Spleen (tissue), 13 donors: ENCODE measurements at regions of chr10 and their contacts with region 1.

Region 1: GRCh38 chr10:91163269-91163868 is 57.1 kb upstream of the PCGF5 start:
- DNase-seq: peak; percentile 95
- H3K4me3 ChIP-seq: peak overlapping the region; percentile 70 to 84 (median 78)
- H3K27ac ChIP-seq: peak overlapping the region; percentile 91 to 98 (median 96)
- H3K4me1 ChIP-seq: peaks cover 4 to 46% (median 34%) of the 10 kb centered on the region in 6 donors
- H3K27me3 ChIP-seq: peaks cover 0 to 8% (median 0%) of the 10 kb centered on the region in 7 donors
- CTCF ChIP-seq: peak in 4 of 11 experiments; percentile 12 to 39 (median 25)
- POLR2A ChIP-seq: peak in 1 of 3 donors; percentile 49

Region 2: DNA sequence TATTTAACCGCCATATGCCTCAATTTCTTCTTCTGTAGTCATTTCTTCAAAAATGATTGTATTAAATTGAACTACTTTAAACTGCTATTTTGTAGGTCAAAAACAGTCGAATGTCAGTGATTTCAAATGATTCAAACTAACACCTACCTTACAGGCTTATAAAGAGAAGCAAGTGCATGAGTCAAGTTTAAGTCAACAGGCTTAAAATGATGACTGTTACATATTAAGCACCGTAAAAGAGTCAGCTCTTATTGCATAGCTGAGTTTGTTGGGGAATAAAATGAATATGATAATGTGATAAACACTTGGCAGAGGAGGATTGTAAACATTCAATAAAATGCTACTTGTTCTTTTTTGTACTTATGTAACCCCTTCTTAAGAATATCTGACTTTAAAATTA is 152.4 kb before region 1 on chr10:
- intact Hi-C with region 1: no loop called
- DNase-seq: no peak
- H3K4me3 ChIP-seq: no peak overlapping the region
- H3K27ac ChIP-seq: no peak overlapping the region
- H3K4me1 ChIP-seq: peaks cover 0 to 34% (median 14%) of the 10 kb centered on the region in 6 donors
- H3K27me3 ChIP-seq: no peaks in the 10 kb centered on the region
- CTCF ChIP-seq: no peak
- POLR2A ChIP-seq: no peak

Region 3: GRCh38 chr10:91220194-91220953 is 57.0 kb after region 1 on chr10 and contains the start of gene PCGF5:
- intact Hi-C with region 1: loop called (anchors 10 kb)
- DNase-seq: peak; percentile 99
- H3K4me3 ChIP-seq: peak within 1 kb of the TSS; percentile 72 to 92 (median 79)
- H3K27ac ChIP-seq: peak within 1 kb of the TSS; percentile 87 to 97 (median 94)
- H3K4me1 ChIP-seq: peaks cover 24 to 75% (median 49%) of the 10 kb centered on the region in 6 donors
- H3K27me3 ChIP-seq: no peaks in the 10 kb centered on the region
- CTCF ChIP-seq: peak in 10 of 11 experiments; percentile 40 to 80 (median 61)
- POLR2A ChIP-seq: peak in 2 of 3 donors; percentile 69 to 76
- total RNA-seq, gene PCGF5: 48.6 to 68.5 (median 51.6) TPM

Region 4: GRCh38 chr10:91251430-91252056 is 88.2 kb after region 1 on chr10:
- intact Hi-C with region 1: no loop called
- DNase-seq: peak; percentile 16
- H3K4me3 ChIP-seq: no peak overlapping the region
- H3K27ac ChIP-seq: no peak overlapping the region
- H3K4me1 ChIP-seq: peaks cover 0 to 33% (median 0%) of the 10 kb centered on the region in 6 donors
- H3K27me3 ChIP-seq: no peaks in the 10 kb centered on the region
- CTCF ChIP-seq: peak; percentile 71 to 95 (median 89)
- POLR2A ChIP-seq: no peak